Thyroid gland (tissue), 4 donors: ENCODE measurements at regions of chr9 and their contacts with region 1.

Region 1: DNA sequence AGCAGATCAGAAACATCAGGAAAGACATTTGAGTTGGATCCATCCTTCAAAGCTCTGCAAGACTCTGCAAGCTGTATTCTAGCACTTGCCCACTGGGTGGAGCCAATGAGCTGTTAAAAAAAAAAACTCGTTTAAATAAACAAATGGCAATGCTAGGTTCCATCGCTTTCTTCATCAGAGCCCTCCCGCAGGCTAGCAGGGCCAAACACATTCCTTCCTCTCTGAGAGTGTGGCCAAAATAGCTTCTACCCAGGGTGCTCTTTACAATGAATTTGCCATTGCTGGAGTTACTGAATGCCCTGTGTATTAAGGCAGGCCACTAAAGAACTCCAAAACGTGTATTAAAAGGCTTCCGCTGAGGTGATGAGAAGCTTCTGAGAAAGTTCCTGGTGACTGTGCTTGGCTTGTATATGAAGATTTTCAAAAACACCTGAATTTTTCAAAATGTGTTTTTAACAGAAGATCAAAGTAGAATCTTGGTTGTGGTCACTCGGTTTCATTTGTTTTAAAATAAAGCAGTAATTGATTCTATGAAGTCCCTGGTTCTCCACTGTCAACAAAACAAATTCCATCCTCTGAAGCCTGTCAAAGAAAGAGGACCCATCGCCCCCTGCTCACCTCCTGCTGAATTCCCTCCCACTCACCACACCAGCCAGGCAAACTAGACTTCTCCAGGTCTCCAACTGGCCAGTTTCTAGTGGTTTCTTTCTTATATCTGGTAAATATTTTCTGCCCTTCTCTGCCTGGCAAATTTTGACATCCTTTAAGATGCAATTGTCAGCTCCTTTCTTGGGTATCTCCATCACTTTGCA is 36.5 kb upstream of the EQTN start:
- DNase-seq: peak; percentile 70 to 71
- H3K4me3 ChIP-seq: no peak overlapping the region
- H3K27ac ChIP-seq: peak overlapping the region in 1 of 3 donors; percentile 3
- H3K4me1 ChIP-seq: peaks cover 7 to 19% of the 10 kb centered on the region in 2 donors
- H3K27me3 ChIP-seq: no peaks in the 10 kb centered on the region
- CTCF ChIP-seq: peak; percentile 61 to 95 (median 85)
- POLR2A ChIP-seq: no peak

Region 2: GRCh38 chr9:27529316-27530278 is 196.2 kb after region 1 on chr9 and contains the start of gene MOB3B:
- intact Hi-C with region 1: loop called (anchors 5 kb)
- DNase-seq: peak; percentile 79 to 88
- H3K4me3 ChIP-seq: peak within 1 kb of the TSS; percentile 24 to 96 (median 79)
- H3K27ac ChIP-seq: peak within 1 kb of the TSS; percentile 91 to 92 (median 91)
- H3K4me1 ChIP-seq: peaks cover 27 to 35% of the 10 kb centered on the region in 2 donors
- H3K27me3 ChIP-seq: no peaks in the 10 kb centered on the region
- CTCF ChIP-seq: peak; percentile 58 to 98 (median 96)
- POLR2A ChIP-seq: peak in 1 of 2 donors; percentile 79
- total RNA-seq, gene MOB3B: 9.8 to 17.6 (median 14.6) TPM

Region 3: DNA sequence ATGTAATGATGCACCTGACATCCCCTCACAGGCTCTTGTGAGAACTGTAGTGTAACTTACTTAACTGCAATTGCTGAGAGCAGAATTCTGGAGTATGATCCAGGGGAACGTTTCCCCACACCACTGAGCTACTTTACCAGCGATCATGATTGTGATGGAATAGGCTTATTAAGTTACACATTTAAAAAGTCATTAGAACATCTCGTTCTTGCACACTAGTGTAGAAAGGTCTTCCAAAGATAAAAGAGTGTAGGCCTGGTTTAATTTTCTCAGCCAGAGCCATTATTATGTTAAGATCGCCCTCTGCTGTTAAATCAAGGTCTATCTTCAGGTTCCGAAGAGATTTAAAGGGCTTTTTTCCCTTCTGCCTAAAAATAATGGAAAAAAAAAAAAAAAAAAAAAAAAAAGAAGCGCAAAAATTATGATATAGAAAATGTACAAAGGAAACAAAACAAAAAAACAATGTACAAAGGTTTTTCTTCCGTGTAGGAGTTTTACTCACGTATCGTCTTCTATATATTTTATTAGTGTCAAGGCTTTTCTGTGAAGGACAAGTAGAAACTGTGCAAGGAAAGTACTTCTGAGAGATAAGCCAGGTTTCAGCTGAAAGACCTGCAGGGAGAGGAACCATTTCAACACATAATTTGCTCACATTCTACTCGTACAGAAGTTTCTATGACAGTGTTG is 214.8 kb after region 1 on chr9:
- intact Hi-C with region 1: loop called (anchors 2 kb)
- DNase-seq: no peak
- H3K4me3 ChIP-seq: no peak overlapping the region
- H3K27ac ChIP-seq: peak overlapping the region in 1 of 3 donors; percentile 30
- H3K4me1 ChIP-seq: peaks cover 7 to 12% of the 10 kb centered on the region in 2 donors
- H3K27me3 ChIP-seq: no peaks in the 10 kb centered on the region
- CTCF ChIP-seq: peak in 5 of 6 experiments; percentile 20 to 83 (median 49)
- POLR2A ChIP-seq: no peak